Mucosa of descending colon (tissue), 3 donors: ENCODE measurements at regions of chr6 and their contacts with region 1.

Region 1: DNA sequence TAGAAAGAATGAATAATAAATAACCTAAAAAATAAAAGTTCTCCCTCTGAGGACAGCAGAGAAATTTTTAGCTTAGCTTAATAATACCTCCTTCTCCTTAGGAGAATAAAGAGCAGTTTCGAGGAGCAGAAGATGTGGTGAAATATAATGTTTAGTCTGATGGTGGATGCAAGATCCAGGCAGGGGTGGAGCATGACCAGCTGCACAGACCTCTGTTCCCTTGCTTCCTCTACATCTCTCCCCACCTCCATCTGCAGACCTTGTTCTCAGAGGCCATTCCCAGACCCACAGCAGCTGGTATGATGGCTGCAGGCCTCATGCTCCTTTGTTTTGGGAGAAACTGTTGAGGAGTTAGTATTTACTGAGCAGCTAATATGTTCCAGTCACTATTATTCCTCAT is 1.5 kb downstream of the BTN3A2 start:
- DNase-seq: no peak
- ATAC-seq: no peak
- H3K4me3 ChIP-seq: no peak overlapping the region
- H3K4me1 ChIP-seq: peaks cover 4% of the 10 kb centered on the region
- CTCF ChIP-seq: no peak

Region 2: DNA sequence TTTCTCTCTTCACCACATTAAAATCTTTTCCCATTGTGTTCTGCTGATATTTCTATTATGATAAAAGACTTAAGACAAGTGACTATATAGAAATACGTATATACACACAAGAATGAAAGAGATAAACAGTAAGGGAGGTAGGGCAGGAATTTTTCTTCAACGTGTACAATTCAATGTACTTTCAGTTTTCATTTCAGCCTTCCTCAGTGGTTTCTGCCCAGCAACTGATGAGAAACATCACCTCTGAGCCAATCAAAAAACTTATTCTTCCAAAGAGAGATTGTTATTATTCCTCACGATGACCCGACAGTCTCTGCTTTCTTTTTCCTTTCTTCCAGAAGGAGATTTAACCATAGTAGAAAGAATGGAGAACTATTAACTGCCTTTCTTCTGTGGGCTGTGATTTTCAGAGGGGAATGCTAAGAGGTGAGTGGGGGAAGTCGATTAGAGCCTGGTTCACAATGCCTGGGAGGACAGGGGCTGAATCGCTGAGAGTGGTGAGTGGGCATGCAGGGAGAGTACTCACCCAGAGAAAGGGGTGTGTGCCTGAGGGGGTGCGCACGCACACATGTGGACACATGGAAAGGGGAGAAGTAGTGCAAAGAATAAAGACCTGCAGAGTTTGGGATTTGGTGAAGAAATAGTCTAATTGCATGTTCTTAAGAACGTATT is 35.6 kb after region 1 on chr6 and contains the start of gene BTN3A1:
- intact Hi-C with region 1: loop called in 1 of 2 experiments (anchors 5 kb)
- DNase-seq: peak; percentile 69 to 86 (median 82)
- ATAC-seq: peak; percentile 95
- H3K4me3 ChIP-seq: peak within 1 kb of the TSS; percentile 52
- H3K4me1 ChIP-seq: peaks cover 19% of the 10 kb centered on the region
- CTCF ChIP-seq: no peak
- total RNA-seq, gene BTN3A1: 25.5 to 45.8 (median 34.4) TPM

Region 3: GRCh38 chr6:26514984-26515383 is 148.5 kb after region 1 on chr6:
- intact Hi-C with region 1: no loop called
- DNase-seq: no peak
- ATAC-seq: peak; percentile 26
- H3K4me3 ChIP-seq: no peak overlapping the region
- H3K4me1 ChIP-seq: peaks cover under 1% of the 10 kb centered on the region
- CTCF ChIP-seq: no peak

Region 4: DNA sequence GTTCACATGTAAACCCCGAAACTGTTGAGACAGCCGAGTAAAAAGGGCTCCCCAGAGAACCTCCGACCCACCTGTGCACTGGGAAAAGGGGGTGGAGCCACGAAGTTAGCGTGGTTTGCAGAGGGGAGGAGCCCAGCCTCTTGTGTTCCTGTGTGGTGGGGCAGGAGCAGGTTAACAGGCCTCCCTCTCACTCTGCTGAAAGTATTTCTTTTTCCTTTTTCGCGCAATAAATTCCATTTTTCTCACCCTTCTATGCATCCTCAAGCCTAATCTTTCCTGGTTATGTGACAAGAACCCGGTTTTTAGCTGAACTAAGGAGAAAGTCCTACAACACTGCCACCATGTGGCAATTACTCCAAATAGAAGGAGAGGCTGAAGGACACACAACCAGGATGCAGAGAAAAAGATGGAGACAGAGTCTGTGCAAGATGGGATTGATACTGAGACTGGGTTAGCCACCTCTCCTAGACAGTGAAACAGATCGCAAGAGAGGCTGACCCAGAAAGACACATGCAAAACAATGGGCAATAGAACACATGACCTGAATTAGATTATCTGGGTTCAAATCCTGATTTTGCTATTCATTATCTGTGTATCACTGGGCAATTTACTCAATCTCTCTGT is 712.3 kb after region 1 on chr6:
- intact Hi-C with region 1: no loop called
- DNase-seq: peak in 2 of 3 donors; percentile 55 to 67
- ATAC-seq: peak; percentile 86
- H3K4me3 ChIP-seq: no peak overlapping the region
- H3K4me1 ChIP-seq: no peaks in the 10 kb centered on the region
- CTCF ChIP-seq: peak; percentile 19